ENCODE measurements at regions of chr2 and their contacts with region 1.

Region 1: GRCh38 chr2:137348296-137348695 is 583.0 kb downstream of the THSD7B start:
- DNase-seq: no peak
- H3K4me3 ChIP-seq: no peak overlapping the region
- H3K27ac ChIP-seq: no peak overlapping the region
- H3K4me1 ChIP-seq: no peaks in the 10 kb centered on the region
- H3K27me3 ChIP-seq: no peaks in the 10 kb centered on the region
- CTCF ChIP-seq: no peak
- EP300 ChIP-seq: no peak
- POLR2A ChIP-seq: no peak

Region 2: GRCh38 chr2:136550181-136550580 is 798.1 kb before region 1 on chr2:
- intact Hi-C with region 1: loop called in 1 of 4 experiments (anchors 10 kb)
- DNase-seq: no peak
- H3K4me3 ChIP-seq: no peak overlapping the region
- H3K27ac ChIP-seq: no peak overlapping the region
- H3K4me1 ChIP-seq: no peaks in the 10 kb centered on the region
- H3K27me3 ChIP-seq: no peaks in the 10 kb centered on the region
- CTCF ChIP-seq: no peak
- EP300 ChIP-seq: no peak
- POLR2A ChIP-seq: no peak

Region 3: GRCh38 chr2:137107904-137108303 is 240.4 kb before region 1 on chr2:
- intact Hi-C with region 1: no loop called
- DNase-seq: no peak
- H3K4me3 ChIP-seq: no peak overlapping the region
- H3K27ac ChIP-seq: no peak overlapping the region
- H3K4me1 ChIP-seq: no peaks in the 10 kb centered on the region
- H3K27me3 ChIP-seq: no peaks in the 10 kb centered on the region
- CTCF ChIP-seq: no peak
- EP300 ChIP-seq: no peak
- POLR2A ChIP-seq: no peak

Measured in ovary (tissue), 10 donors.